ENCODE measurements at regions of chr3 and their contacts with region 1.

Region 1: GRCh38 chr3:25532431-25533162 is 104.5 kb downstream of the RARB start:
- DNase-seq: peak; percentile 13 to 72
- H3K4me3 ChIP-seq: no peak overlapping the region
- H3K27ac ChIP-seq: no peak overlapping the region
- H3K4me1 ChIP-seq: peaks cover 0 to 3% (median 0%) of the 10 kb centered on the region in 4 experiments; a peak in 1 of 7 replicates
- H3K27me3 ChIP-seq: no peaks in the 10 kb centered on the region
- CTCF ChIP-seq: peak in 2 of 3 experiments; percentile 27 to 65; a peak in 2 of 4 replicates
- EP300 ChIP-seq: no peak
- POLR2A ChIP-seq: no peak
- RAD21 ChIP-seq: peak; percentile 40 to 54; a peak in 3 of 4 replicates

Region 2: GRCh38 chr3:25448750-25449692 is 83.6 kb before region 1 on chr3:
- CTCF ChIA-PET with region 1: no interaction called
- POLR2A ChIA-PET with region 1: no interaction called
- DNase-seq: no peak
- H3K4me3 ChIP-seq: no peak overlapping the region
- H3K27ac ChIP-seq: no peak overlapping the region
- H3K4me1 ChIP-seq: peaks cover 0 to 7% (median 2%) of the 10 kb centered on the region in 4 experiments; a peak in 5 of 7 replicates
- H3K27me3 ChIP-seq: no peaks in the 10 kb centered on the region
- CTCF ChIP-seq: no peak
- EP300 ChIP-seq: no peak
- POLR2A ChIP-seq: no peak
- RAD21 ChIP-seq: 0 out of 4 replicates have a peak, but pooled peaks of 1 of the 2 experiments have one; percentile 1

Region 3: DNA sequence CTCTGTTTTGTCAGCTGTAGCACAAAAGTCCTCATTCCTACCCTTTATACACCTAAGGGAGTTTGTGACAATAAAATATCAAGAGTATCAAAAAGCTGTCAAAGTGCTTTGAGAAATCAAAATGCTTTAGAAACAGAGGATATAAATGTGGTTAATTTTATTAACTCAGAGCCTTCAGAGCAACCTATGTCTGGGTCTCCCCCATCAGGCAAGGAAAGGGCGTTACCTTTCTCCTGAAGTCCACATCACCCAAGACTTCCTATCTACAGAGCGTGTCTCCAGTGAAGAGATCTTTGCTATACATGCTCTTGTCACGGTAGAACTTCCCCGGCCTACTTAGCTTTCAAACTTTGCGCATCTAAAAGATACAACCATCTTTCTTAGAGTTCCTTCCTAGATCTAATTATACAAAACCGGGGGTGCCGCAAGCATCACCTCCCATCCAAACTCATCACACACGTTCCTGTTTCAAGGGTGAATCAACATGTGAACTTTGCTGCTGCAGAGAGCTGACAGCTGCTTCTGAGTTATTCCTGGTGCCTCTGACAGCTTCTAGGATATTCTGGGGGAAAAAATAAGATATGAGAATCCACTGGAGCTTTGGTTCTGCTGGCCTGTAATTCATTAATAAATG is 11.6 kb before region 1 on chr3:
- CTCF ChIA-PET with region 1: interaction called, 13 read pairs
- POLR2A ChIA-PET with region 1: no interaction called
- DNase-seq: no peak
- H3K4me3 ChIP-seq: no peak overlapping the region
- H3K27ac ChIP-seq: no peak overlapping the region
- H3K4me1 ChIP-seq: no peaks in the 10 kb centered on the region
- H3K27me3 ChIP-seq: no peaks in the 10 kb centered on the region
- CTCF ChIP-seq: peak in 1 of 3 experiments; percentile 8; a peak in 1 of 4 replicates
- EP300 ChIP-seq: no peak
- POLR2A ChIP-seq: no peak
- RAD21 ChIP-seq: peak; percentile 32 to 35; a peak in 3 of 4 replicates

Region 4: DNA sequence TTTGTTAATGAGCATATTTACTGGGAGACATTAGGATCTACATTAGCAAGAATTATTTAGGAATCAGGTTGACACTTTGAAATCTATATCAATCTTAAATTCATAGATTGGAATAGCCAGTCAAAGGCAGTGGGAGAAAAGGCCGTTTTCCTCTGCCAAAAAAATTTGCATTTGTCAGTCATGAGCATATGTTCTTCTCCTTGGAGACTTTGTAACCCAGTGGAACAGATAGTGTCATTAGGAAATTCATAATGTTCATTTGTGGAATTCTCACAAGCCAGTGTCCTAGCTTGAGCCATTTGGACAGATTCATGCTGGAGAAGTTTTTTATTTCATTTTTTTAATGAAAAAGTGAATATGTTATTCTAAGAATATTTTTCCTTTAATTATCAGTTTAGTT is 517.4 kb after region 1 on chr3:
- CTCF ChIA-PET with region 1: no interaction called
- POLR2A ChIA-PET with region 1: no interaction called
- DNase-seq: no peak
- H3K4me3 ChIP-seq: no peak overlapping the region
- H3K27ac ChIP-seq: no peak overlapping the region
- H3K4me1 ChIP-seq: no peaks in the 10 kb centered on the region
- H3K27me3 ChIP-seq: no peaks in the 10 kb centered on the region
- CTCF ChIP-seq: no peak
- EP300 ChIP-seq: no peak
- POLR2A ChIP-seq: no peak
- RAD21 ChIP-seq: no peak